Vagina (tissue), 2 donors: ENCODE measurements at regions of chr9 and their contacts with region 1.

Region 1: DNA sequence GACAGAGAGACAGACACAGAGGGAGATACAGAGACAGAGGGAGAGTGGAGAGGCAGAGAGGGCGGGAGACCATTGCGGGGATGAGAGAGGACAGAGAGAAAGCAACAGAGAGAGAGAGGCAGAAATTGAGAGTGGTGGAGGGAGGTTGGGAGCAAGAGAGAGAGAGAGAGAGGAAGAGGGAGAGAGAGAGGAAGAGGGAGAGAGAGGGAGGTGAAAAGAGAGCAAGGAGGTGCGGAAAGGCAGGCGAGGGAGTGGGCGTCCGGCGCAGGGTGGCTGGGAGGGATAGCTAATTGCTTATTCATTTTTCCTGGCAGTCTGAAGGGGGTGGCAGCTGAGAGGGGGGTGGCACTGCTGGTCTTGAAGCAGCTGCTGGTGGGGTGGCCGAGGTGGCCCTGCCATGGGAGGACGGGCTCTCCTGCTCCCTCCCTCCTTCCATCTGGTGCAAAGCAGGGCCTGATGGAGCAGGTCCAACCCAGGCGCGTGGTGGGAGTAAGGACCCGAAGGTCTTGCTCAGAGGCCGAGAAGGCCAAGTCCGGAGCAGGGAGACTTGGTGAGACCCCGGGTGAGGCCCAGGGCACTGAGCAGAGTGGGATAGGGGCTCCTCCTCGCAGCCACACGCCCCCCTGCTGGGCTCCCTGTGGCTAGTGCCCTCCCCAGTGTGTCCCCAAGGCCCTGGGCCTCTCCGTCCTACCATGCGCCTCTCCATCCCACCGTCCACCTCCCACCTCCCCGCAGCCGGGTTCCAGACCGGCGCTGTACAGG is 25.3 kb upstream of the RNU6ATAC start:
- DNase-seq: no peak
- H3K4me3 ChIP-seq: no peak overlapping the region
- H3K27ac ChIP-seq: no peak overlapping the region
- H3K4me1 ChIP-seq: peaks cover 8% of the 10 kb centered on the region
- H3K27me3 ChIP-seq: no peaks in the 10 kb centered on the region
- CTCF ChIP-seq: no peak
- POLR2A ChIP-seq: no peak

Region 2: GRCh38 chr9:134111064-134111463 is 78.6 kb before region 1 on chr9:
- intact Hi-C with region 1: no loop called
- DNase-seq: no peak
- H3K4me3 ChIP-seq: no peak overlapping the region
- H3K27ac ChIP-seq: no peak overlapping the region
- H3K4me1 ChIP-seq: no peaks in the 10 kb centered on the region
- H3K27me3 ChIP-seq: no peaks in the 10 kb centered on the region
- CTCF ChIP-seq: no peak
- POLR2A ChIP-seq: no peak

Region 3: GRCh38 chr9:134306636-134307600 is 117.3 kb after region 1 on chr9:
- intact Hi-C with region 1: loop called (anchors 5 kb)
- DNase-seq: no peak
- H3K4me3 ChIP-seq: no peak overlapping the region
- H3K27ac ChIP-seq: no peak overlapping the region
- H3K4me1 ChIP-seq: no peaks in the 10 kb centered on the region
- H3K27me3 ChIP-seq: no peaks in the 10 kb centered on the region
- CTCF ChIP-seq: no peak
- POLR2A ChIP-seq: no peak

Region 4: GRCh38 chr9:134365791-134366688 is 176.4 kb after region 1 on chr9:
- intact Hi-C with region 1: no loop called
- DNase-seq: peak in 1 of 2 donors; percentile 96
- H3K4me3 ChIP-seq: peak overlapping the region; percentile 3 to 9
- H3K27ac ChIP-seq: peak overlapping the region; percentile 90
- H3K4me1 ChIP-seq: peaks cover 96% of the 10 kb centered on the region
- H3K27me3 ChIP-seq: no peaks in the 10 kb centered on the region
- CTCF ChIP-seq: peak in 1 of 3 experiments; percentile 13
- POLR2A ChIP-seq: peak in 1 of 2 donors; percentile 60